Activated CD8-positive, alpha-beta T cell treated with anti-CD3 and anti-CD28 coated beads for 36 hours (primary cell): ENCODE measurements at regions of chr15 and their contacts with region 1.

Region 1: GRCh38 chr15:58182460-58183163 is 44.4 kb downstream of the AQP9 start:
- DNase-seq: peak; percentile 48
- ATAC-seq: peak; percentile 69
- H3K4me3 Mint-ChIP-seq: no peak overlapping the region
- H3K27ac Mint-ChIP-seq: no peak overlapping the region
- H3K4me1 Mint-ChIP-seq: peaks cover 8% of the 10 kb centered on the region
- H3K27me3 Mint-ChIP-seq: peaks cover 37% of the 10 kb centered on the region
- CTCF ChIP-seq: peak; percentile 72

Region 2: DNA sequence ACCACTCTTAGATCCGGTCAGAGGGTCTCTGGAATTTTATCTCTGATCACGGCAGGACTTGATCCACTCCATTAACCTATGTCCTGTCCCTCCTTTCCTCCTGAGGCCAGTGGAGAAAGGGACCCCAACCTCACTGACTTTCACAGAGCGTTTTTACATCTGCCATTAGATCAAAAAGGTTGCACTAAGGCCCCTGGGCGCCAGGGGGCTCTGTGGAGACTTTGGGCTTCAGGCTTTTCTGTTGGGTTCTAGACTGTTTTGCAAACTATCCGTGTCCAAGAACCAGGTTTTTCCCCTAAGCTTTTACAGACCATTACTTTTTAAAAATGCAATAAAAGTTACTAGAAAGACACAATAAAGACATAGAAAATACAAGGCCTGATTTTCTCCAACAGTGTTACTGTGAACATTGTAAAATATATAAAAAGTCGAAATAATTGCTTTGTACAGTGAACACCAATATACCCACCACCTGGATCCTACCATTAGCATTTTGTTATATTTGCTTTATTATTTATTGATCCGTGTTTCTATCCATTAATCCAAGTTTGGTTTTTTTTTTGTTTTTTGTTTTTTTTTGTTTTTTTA is 316.4 kb before region 1 on chr15:
- CTCF ChIA-PET with region 1: interaction called, 6 read pairs
- POLR2A ChIA-PET with region 1: no interaction called
- intact Hi-C with region 1: loop called (anchors 5 kb)
- DNase-seq: peak; percentile 78
- ATAC-seq: peak; percentile 64
- H3K4me3 Mint-ChIP-seq: no peak overlapping the region
- H3K27ac Mint-ChIP-seq: no peak overlapping the region
- H3K4me1 Mint-ChIP-seq: peaks cover 7% of the 10 kb centered on the region
- H3K27me3 Mint-ChIP-seq: peaks cover 27% of the 10 kb centered on the region
- CTCF ChIP-seq: peak; percentile 87

Region 3: GRCh38 chr15:58043192-58043903 is 139.3 kb before region 1 on chr15:
- CTCF ChIA-PET with region 1: interaction called, 7 read pairs
- POLR2A ChIA-PET with region 1: no interaction called
- intact Hi-C with region 1: loop called (anchors 10 kb)
- DNase-seq: peak; percentile 71
- ATAC-seq: no peak
- H3K4me3 Mint-ChIP-seq: no peak overlapping the region
- H3K27ac Mint-ChIP-seq: no peak overlapping the region
- H3K4me1 Mint-ChIP-seq: no peaks in the 10 kb centered on the region
- H3K27me3 Mint-ChIP-seq: peaks cover 30% of the 10 kb centered on the region
- CTCF ChIP-seq: peak; percentile 63